ENCODE measurements at regions of chr6 and their contacts with region 1.

Region 1: DNA sequence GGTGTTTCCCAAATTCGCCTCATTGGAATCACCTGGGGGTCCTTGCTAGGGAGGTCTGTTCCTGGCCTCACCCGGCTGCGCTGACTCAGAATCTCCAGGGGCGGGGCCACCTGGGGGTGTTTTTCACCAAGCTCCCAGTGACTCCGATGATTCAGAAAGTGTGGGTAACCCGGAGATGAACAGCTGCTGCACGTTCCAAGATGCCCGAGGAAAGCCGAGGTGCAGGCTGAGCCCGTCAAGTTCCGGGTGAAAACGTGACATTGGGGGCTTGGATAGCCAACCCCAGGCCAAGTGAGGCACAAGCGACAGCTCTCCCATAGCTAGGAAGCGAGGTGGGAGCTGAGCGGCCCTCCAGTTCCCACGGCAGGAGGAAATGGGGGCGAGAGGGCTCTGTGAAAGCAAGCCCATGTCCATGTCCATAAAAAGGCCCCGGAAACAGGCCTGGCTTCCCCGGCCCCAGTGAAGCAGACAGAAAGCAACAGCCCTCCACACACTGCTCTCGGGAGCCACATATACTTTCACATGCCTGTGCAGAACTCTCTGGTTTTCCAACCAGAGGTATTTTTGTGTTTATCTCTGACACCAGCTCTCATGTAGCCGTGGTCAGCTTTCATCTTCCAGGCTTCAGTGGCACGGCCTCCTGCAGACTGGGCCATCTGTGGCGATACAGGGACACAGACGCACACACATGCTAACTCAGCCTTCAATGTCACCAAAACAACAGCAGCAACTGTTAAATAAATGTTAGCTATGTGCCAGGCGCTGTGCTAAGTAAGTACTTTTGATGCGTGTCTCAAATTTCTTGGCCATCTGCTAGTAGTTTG is 90.7 kb upstream of the CCDC28A start:
- DNase-seq: peak; percentile 29
- ATAC-seq: peak; percentile 22

Region 2: GRCh38 chr6:138572167-138572865 is 110.6 kb before region 1 on chr6:
- intact Hi-C with region 1: no loop called
- DNase-seq: peak; percentile 67
- ATAC-seq: peak; percentile 92

Region 3: GRCh38 chr6:138752017-138752416 is 69.1 kb after region 1 on chr6:
- intact Hi-C with region 1: loop called (anchors 10 kb)
- DNase-seq: no peak
- ATAC-seq: no peak

Region 4: DNA sequence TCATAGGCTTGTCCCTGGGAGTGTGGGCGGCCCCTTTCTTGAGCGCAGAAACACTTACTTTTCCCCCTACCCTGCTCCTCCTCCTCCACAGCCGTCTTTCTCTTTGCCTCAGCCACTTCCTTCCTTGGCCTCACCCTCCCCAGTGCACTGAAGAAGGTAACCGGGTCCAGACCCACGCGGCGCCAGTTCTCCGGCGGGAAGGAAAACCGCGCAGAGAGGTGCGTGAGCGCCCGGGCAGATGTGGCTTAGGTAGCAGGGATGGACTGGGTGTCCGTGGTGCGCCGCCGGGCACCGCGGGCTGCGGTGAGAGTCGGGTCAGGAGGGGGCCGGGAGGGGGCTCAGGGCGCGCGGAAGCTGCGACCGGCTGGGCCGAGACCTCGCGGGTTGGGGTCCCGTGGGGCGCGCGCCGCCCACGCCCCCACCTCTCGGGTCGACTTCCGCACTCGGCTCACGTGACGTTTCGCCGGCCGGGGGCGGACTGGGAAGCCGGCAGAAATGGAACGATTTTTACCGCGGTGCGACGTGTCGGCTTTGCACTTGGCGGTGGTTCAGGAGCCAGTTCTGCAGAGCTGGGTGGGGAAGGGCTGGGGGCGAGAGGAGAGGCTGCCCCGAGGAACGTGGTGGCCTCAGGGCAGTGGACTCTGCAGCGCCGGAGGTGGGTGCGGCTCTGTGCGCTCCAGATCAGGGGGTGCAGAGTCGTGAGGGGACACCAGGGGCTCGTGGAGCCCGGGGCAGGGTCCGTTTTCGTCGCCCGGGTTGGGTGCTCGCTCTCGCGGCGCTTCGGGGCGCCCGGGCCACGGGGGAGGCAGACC is 345.9 kb after region 1 on chr6 and contains the start of gene ABRACL:
- intact Hi-C with region 1: no loop called
- DNase-seq: peak; percentile 75
- ATAC-seq: peak; percentile 77
- total RNA-seq, gene ABRACL: 7.1 TPM

Measured in left ventricle myocardium superior (tissue), 1 donor.